ENCODE measurements at regions of chr19 and their contacts with region 1.

Region 1: DNA sequence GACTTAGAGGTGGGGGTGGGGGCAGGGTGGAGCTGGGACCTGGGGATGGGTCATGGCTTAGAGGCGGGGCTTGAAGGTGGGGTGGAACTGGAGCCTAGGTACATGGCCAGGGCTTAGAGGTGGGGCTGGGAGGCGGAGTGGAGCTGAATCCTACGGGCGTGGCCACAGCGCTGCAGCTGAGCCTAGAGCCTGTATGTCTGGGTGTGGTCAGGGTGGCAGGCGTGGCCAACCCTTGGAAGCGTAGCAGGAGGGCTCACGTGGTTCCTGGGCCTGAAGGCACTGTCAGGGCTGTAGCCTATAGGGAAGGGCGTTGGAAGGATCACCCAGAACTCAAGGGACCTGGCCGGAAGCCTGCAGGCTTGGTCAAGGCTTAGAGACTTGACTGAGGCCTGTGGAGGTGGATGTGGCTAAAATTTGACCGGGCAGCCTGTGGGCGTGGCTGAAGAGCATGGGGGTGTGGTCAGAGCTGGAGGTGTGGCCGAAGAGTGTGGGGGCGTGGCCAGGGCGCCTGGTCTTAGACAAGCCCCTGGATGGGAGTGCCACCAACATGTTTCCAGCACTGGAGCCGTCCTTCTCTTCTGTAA is 24.3 kb downstream of the COLGALT1 start:
- DNase-seq: peak; percentile 85
- ATAC-seq: peak; percentile 85

Region 2: GRCh38 chr19:17450264-17451075 is 129.3 kb before region 1 on chr19:
- intact Hi-C with region 1: loop called (anchors 10 kb)
- DNase-seq: no peak
- ATAC-seq: no peak

Region 3: DNA sequence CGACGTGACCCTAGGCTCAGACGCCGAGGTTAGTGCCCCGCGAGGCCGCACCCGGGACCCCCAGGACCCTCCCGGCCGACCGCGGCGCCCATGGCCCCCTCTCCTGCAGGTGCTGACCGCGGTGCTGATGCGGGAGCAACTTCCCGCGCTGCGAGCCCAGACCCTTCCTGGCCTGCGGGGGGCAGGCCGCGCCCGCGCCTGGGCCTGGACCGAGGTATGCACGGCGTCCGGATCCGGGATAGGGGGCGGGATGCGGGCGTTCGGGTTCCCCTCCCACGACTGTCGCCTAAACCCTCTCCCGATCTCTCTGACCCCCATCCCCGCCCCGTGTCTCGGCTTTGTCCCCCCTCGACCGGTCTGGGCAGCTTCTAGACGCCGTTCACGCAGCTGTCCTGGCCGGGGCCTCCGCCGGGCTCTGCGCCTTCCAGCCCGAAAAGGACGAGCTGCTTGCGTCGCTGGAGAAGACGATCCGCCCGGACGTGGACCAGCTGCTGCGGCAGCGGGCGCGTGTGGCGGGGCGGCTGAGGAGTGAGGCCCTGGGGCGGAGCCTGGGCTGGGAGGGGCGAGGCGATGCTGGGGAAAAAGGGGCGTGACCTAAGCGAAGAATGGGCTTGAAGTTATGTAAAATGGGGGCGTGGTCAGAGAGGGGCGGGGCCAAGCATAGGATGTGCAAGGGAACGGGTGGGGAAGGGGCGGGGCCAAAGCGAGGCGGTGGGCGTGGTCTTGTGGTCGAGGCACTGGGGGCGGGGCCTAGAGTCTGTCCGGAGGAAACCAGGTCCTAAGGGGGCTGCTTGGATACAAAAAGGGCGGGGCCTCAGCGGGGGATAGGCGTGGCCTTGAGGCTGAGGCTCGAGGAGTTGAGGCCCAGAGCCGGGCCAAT is 40.3 kb before region 1 on chr19:
- intact Hi-C with region 1: no loop called
- DNase-seq: peak; percentile 99
- ATAC-seq: peak; percentile 95